Psoas muscle (tissue), 8 donors: ENCODE measurements at regions of chr7 and their contacts with region 1.

Region 1: DNA sequence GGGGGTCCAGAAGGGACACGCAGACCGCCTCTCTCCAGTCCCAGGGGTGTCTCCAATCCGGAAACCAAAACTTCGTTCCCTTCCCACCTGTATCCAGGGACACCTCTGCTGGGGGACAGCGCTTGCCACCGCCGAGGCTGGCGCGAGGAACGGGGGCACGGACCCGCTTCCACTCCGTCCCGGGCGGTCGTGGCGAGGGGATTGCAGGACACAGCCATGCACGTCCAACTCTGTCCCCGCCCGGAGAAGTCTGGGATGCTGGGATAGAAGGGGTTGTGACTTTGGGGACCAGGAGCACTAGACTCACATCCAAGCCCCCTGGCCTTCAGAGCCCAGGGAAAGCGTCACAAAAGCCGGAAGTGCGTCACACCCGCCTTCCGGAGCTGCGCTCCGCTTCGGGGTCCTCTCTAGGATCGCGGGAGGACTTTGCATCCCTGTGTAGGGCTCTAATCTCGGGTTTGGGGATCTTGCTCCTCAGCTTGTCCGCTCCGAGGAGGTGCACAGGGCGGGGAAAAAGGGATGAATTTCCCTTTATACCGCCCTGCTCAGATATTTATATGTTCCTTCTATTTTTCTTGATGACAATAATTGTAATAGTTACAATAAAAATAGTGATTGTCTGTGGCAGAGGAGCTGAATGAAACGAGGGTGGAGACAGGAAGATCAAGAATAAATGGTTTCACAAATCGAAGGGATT is at the start of gene FAM200A:
- DNase-seq: peak; percentile 89 to 94
- ATAC-seq: peak; percentile 98 to 100 (median 99)
- H3K4me3 ChIP-seq: peak within 1 kb of the TSS; percentile 80
- H3K27ac ChIP-seq: peak within 1 kb of the TSS; percentile 88
- H3K4me1 ChIP-seq: peaks cover 21% of the 10 kb centered on the region
- H3K27me3 ChIP-seq: no peaks in the 10 kb centered on the region
- CTCF ChIP-seq: no peak
- total RNA-seq, gene FAM200A: 2.9 to 6.3 (median 4.4) TPM

Region 2: GRCh38 chr7:99579956-99580777 is 28.3 kb after region 1 on chr7:
- intact Hi-C with region 1: no loop called
- DNase-seq: peak; percentile 38 to 63
- ATAC-seq: peak; percentile 43 to 65 (median 60)
- H3K4me3 ChIP-seq: peak overlapping the region; percentile 72
- H3K27ac ChIP-seq: no peak overlapping the region
- H3K4me1 ChIP-seq: peaks cover 14% of the 10 kb centered on the region
- H3K27me3 ChIP-seq: peaks cover 0 to 12% (median 5%) of the 10 kb centered on the region in 3 donors
- CTCF ChIP-seq: peak; percentile 35

Region 3: GRCh38 chr7:99616359-99617191 is 64.7 kb after region 1 on chr7 and contains the start of gene ZSCAN25:
- intact Hi-C with region 1: loop called in 1 of 2 experiments (anchors 2 kb)
- DNase-seq: peak; percentile 89 to 94
- ATAC-seq: peak; percentile 97 to 98 (median 98)
- H3K4me3 ChIP-seq: peak within 1 kb of the TSS; percentile 97
- H3K27ac ChIP-seq: peak within 1 kb of the TSS; percentile 87
- H3K4me1 ChIP-seq: peaks cover 10% of the 10 kb centered on the region
- H3K27me3 ChIP-seq: no peaks in the 10 kb centered on the region
- CTCF ChIP-seq: peak; percentile 21
- total RNA-seq, gene ZSCAN25: 6.3 to 10.5 (median 7.0) TPM